CD4-positive, alpha-beta T cell (primary cell): ENCODE measurements at regions of chr1 and their contacts with region 1.

Region 1: GRCh38 chr1:226736908-226737818 is 1.9 kb downstream of the ITPKB start:
- DNase-seq: peak in 13 of 14 experiments; percentile 38 to 78 (median 53)
- ATAC-seq: peak; percentile 6
- H3K4me3 ChIP-seq: peak overlapping the region; percentile 93
- H3K4me3 Mint-ChIP-seq: peak overlapping the region; percentile 98
- H3K27ac ChIP-seq: peak overlapping the region; percentile 59 to 92
- H3K27ac Mint-ChIP-seq: peak overlapping the region; percentile 95
- H3K4me1 ChIP-seq: peaks cover 56% of the 10 kb centered on the region
- H3K4me1 Mint-ChIP-seq: peaks cover 56% of the 10 kb centered on the region
- H3K27me3 ChIP-seq: no peaks in the 10 kb centered on the region
- H3K27me3 Mint-ChIP-seq: peaks cover 7% of the 10 kb centered on the region
- CTCF ChIP-seq: no peak

Region 2: GRCh38 chr1:226642876-226643576 is 94.1 kb before region 1 on chr1:
- CTCF ChIA-PET with region 1: interaction called, 3 read pairs
- POLR2A ChIA-PET with region 1: interaction called, 12 read pairs
- intact Hi-C with region 1: no loop called
- DNase-seq: peak in 11 of 14 experiments; percentile 35 to 79 (median 58)
- ATAC-seq: peak; percentile 75
- H3K4me3 ChIP-seq: no peak overlapping the region
- H3K4me3 Mint-ChIP-seq: peak overlapping the region; percentile 75
- H3K27ac ChIP-seq: peak overlapping the region; percentile 41 to 73
- H3K27ac Mint-ChIP-seq: no peak overlapping the region
- H3K4me1 ChIP-seq: peaks cover 78% of the 10 kb centered on the region
- H3K4me1 Mint-ChIP-seq: peaks cover 51% of the 10 kb centered on the region
- H3K27me3 ChIP-seq: no peaks in the 10 kb centered on the region
- H3K27me3 Mint-ChIP-seq: no peaks in the 10 kb centered on the region
- CTCF ChIP-seq: no peak

Region 3: DNA sequence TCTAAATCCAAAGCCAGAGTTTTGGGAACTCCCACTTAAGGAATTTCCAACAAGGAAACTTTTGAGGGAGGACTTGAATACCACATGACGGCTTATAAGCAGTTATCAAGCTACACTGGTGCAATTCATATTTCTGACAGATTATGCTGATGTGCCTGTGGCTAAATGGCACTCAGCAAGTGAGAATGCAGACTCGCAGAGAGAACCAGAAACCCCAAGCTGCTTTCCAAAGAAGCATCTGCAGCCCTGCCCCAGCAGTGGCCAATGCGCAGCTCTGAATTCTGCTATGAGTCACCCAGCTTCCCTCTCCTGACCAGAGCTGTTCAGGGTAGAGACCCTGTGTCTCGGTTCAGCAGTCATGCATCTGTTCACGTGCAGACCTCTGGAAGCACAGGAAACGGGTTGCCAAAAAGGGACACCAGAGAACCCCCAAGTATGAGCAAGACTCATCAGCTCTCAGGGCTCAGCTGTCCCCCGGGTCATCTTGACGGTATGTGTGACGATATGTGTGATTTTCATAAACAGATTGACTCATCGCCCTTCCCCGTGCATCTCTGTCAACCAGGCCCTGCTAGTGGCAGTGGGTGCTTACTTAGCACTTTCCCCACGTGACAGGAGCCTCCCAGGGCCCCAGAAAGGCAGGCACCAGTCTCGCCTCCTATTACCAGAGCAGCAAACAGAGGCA is 74.4 kb before region 1 on chr1:
- CTCF ChIA-PET with region 1: interaction called, 3 read pairs
- POLR2A ChIA-PET with region 1: interaction called, 6 read pairs
- intact Hi-C with region 1: loop called in 1 of 2 experiments (anchors 2 kb)
- DNase-seq: peak; percentile 67 to 96 (median 81)
- ATAC-seq: peak; percentile 85
- H3K4me3 ChIP-seq: no peak overlapping the region
- H3K4me3 Mint-ChIP-seq: peak overlapping the region; percentile 71
- H3K27ac ChIP-seq: peak overlapping the region in 1 of 2 donors; percentile 47
- H3K27ac Mint-ChIP-seq: no peak overlapping the region
- H3K4me1 ChIP-seq: no peaks in the 10 kb centered on the region
- H3K4me1 Mint-ChIP-seq: no peaks in the 10 kb centered on the region
- H3K27me3 ChIP-seq: no peaks in the 10 kb centered on the region
- H3K27me3 Mint-ChIP-seq: no peaks in the 10 kb centered on the region
- CTCF ChIP-seq: no peak

Region 4: DNA sequence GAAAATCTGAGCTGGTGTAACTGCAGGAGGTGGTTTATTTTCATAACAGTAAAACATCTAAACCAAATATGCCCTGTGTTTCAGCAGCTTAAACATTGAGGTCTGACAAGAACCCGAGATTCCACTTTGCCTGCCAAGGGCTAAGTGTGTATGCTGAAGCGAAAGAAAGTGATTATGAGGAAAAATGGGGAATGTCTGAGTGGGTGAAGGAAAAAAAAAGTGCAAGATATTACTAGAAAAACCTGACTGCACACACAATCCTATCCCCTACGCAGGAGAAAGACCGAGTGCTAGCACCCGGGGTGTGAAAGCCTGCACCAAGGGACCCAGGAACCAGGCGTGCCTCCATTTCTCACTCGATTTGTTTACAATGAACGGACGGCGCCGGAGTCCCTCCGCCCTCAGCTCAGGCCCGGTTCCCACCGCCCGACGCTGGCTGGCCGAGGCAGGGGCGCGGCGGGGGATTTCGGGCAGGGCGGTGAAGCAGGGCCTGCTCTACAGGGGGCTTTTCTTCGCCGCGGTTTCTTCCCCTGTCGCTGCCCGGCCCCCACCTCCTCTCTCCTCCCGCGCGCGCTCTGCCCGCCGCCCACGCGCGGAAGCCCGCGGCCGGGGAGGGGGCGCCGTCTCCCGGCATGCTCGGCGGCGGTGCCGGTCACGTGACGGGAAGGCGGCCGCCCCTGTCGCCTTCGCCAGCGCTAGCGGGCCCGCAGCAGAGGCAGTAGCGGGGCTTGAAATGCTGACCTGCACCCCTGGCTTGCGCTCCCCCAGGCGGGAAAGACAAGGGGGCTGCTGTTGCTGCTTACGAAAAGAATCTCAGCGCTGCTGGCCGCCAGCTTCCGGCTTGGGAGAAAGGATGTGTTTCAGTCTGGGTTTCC is 34.0 kb before region 1 on chr1:
- CTCF ChIA-PET with region 1: interaction called, 3 read pairs
- POLR2A ChIA-PET with region 1: interaction called, 16 read pairs
- intact Hi-C with region 1: loop called in 1 of 2 experiments (anchors 5 kb)
- DNase-seq: peak; percentile 56 to 94 (median 75)
- ATAC-seq: peak; percentile 71
- H3K4me3 ChIP-seq: peak overlapping the region; percentile 65
- H3K4me3 Mint-ChIP-seq: peak overlapping the region; percentile 84
- H3K27ac ChIP-seq: peak overlapping the region; percentile 71 to 95
- H3K27ac Mint-ChIP-seq: peak overlapping the region; percentile 95
- H3K4me1 ChIP-seq: peaks cover 74% of the 10 kb centered on the region
- H3K4me1 Mint-ChIP-seq: peaks cover 91% of the 10 kb centered on the region
- H3K27me3 ChIP-seq: no peaks in the 10 kb centered on the region
- H3K27me3 Mint-ChIP-seq: no peaks in the 10 kb centered on the region
- CTCF ChIP-seq: no peak

Region 5: GRCh38 chr1:226798427-226799411 is 61.6 kb after region 1 on chr1:
- CTCF ChIA-PET with region 1: interaction called, 3 read pairs
- POLR2A ChIA-PET with region 1: interaction called, 26 read pairs
- intact Hi-C with region 1: loop called (anchors 1 to 5 kb)
- DNase-seq: peak; percentile 43 to 87 (median 53)
- ATAC-seq: peak; percentile 84
- H3K4me3 ChIP-seq: no peak overlapping the region
- H3K4me3 Mint-ChIP-seq: peak overlapping the region; percentile 67
- H3K27ac ChIP-seq: peak overlapping the region; percentile 68 to 86
- H3K27ac Mint-ChIP-seq: peak overlapping the region; percentile 98
- H3K4me1 ChIP-seq: peaks cover 36% of the 10 kb centered on the region
- H3K4me1 Mint-ChIP-seq: peaks cover 39% of the 10 kb centered on the region
- H3K27me3 ChIP-seq: no peaks in the 10 kb centered on the region
- H3K27me3 Mint-ChIP-seq: no peaks in the 10 kb centered on the region
- CTCF ChIP-seq: no peak